GM10248 (cell line): ENCODE measurements at regions of chr11 and their contacts with region 1.

Region 1: GRCh38 chr11:15006139-15006759 is 34.1 kb upstream of the CALCA start:
- DNase-seq: peak; percentile 15
- CTCF ChIP-seq: peak; percentile 47

Region 2: GRCh38 chr11:14974515-14975251 is 31.6 kb before region 1 on chr11:
- CTCF ChIA-PET with region 1: interaction called, 15 read pairs
- POLR2A ChIA-PET with region 1: no interaction called
- DNase-seq: peak; percentile 40
- CTCF ChIP-seq: peak; percentile 60

Region 3: GRCh38 chr11:15159085-15159484 is 152.8 kb after region 1 on chr11:
- CTCF ChIA-PET with region 1: no interaction called
- POLR2A ChIA-PET with region 1: no interaction called
- DNase-seq: peak; percentile 24
- CTCF ChIP-seq: peak; percentile 14